AG04450 (cell line): ENCODE measurements at regions of chr2 and their contacts with region 1.

Region 1: DNA sequence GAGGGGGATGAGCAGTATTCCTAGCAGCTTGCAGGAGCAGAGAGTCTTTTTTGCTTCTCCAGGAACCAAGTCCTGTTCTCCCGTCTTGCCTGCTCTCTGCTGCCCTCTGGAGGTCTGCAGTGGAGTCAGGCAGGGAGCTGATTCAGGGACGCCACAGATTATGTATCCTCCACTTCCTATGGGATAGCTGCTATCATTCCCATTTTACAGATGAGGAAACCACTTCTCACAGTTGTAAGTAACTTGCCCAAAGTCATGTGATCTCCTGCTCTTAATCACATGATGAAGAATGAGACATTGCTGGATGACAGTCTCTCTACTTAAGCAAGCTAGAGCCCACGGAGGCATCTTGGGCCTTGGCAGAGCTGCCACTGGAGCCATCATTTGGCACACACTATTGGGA is 8.3 kb downstream of the SLC4A5 start:
- DNase-seq: peak; percentile 42
- H3K4me3 ChIP-seq: no peak overlapping the region
- H3K27ac ChIP-seq: no peak overlapping the region
- H3K27me3 ChIP-seq: peaks cover 19% of the 10 kb centered on the region
- CTCF ChIP-seq: peak; percentile 95

Region 2: DNA sequence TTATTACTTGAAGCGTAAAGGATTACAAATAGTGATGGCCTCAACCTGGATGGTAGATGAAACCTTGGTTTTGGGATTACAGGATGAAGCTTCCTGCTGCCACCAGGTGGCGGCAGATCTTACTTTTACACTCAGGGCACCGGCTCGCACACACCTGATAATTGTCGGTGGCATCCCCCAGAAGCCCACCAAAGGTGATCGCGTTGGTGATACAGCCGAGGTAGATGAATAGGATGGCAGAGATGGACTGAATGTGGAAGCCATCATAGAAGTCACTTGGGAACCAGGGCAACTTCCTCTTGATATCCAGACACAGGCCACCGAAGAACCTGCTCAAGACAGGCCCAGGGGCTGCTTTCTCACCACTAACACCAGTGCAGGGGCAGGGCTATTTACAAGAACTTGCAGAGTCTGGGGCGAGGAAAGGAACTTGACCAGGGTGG is 84.7 kb before region 1 on chr2:
- CTCF ChIA-PET with region 1: interaction called, 74 read pairs
- POLR2A ChIA-PET with region 1: no interaction called
- DNase-seq: no peak
- H3K4me3 ChIP-seq: no peak overlapping the region
- H3K27ac ChIP-seq: no peak overlapping the region
- H3K27me3 ChIP-seq: peaks cover 21% of the 10 kb centered on the region
- CTCF ChIP-seq: peak; percentile 77

Region 3: GRCh38 chr2:74316627-74317295 is 18.2 kb before region 1 on chr2:
- CTCF ChIA-PET with region 1: interaction called, 27 read pairs
- POLR2A ChIA-PET with region 1: no interaction called
- DNase-seq: no peak
- H3K4me3 ChIP-seq: no peak overlapping the region
- H3K27ac ChIP-seq: no peak overlapping the region
- H3K27me3 ChIP-seq: peaks cover 17% of the 10 kb centered on the region
- CTCF ChIP-seq: no peak

Region 4: DNA sequence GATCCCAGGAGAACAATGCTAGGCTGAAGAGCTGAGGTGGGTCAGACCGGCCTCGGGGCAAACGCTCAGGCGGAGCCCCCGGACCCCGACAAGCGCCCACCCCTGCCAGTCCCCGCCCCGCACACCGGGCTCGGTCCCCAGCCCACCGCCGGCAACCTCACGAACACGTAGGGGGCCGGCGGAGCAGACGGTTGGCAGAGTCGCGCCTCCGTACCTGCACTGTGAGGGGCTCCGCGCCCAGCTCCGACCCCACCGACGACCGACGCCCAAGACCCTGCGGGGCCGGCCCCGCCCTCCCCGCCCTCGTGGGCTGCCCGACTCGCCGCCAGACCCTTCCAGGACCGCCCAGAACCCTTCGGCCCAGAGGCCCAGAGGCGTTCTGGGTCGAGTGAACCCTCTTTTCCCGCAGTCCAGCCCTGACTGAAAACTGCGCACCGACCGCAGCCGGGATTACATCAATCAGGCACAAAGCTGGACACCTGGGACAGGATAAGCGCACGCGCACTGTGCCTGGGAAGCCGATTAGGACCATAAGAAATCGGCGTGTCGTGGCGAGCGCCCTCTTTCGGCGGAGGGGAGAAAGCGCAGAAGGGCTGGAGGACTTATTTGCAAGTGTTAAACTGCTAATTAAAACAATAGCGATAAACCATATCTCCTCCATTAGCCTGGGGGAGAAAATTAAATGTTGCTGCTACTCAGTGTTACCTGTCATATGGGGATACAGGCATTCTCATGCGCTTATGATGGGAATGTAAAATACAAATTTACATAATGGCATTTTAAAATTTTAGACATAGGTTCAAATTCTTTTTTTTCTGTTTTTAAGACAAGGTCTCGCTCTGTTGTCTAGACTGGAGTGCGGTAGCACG is 56.9 kb after region 1 on chr2:
- CTCF ChIA-PET with region 1: interaction called, 13 read pairs
- POLR2A ChIA-PET with region 1: interaction called, 4 read pairs
- DNase-seq: peak; percentile 72
- H3K4me3 ChIP-seq: peak overlapping the region; percentile 92
- H3K27ac ChIP-seq: peak overlapping the region; percentile 78
- H3K27me3 ChIP-seq: no peaks in the 10 kb centered on the region
- CTCF ChIP-seq: peak; percentile 98